ENCODE measurements at regions of chr1 and their contacts with region 1.

Region 1: DNA sequence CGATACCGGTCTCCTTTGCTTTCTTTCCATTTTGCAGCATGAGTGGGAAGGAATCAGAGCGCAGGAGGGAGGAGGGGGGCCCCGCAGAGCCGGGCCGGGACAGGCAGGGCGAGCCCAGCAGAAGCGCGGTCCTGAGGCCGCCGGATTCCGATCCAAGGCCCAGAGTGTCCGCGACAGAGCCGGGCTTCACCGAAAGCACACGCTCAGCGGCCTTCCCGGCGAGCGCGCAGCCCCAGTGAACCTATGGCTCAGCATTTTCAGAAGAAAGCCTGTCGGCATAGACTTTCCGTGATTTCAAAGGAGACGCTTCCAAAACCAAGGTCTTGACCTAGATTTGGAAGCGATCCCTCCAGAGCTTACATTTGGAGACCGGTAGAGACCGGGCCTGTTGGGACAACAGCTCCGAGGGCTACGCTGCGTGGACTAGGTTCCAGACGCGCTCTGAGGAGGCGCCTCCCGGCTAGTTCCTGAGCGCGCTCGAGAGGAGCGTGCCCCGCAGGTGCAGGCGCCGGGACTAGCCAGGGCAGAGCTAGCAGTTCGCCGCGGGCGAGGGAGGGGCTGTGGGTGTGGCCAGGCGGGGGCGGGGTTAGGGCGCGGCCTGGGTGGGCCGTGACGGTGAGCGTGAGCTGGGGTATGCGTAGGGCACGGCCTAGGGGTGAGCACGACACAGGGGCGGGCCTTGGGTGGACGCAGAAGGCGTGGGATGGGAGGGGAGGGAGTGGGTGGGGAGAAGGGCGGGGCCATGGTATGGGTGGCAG is 27.8 kb upstream of the PRSS38 start:
- DNase-seq: peak; percentile 76 to 94 (median 90)
- ATAC-seq: peak; percentile 96
- H3K4me3 ChIP-seq: peak overlapping the region; percentile 79
- H3K4me3 Mint-ChIP-seq: peak overlapping the region; percentile 81 to 89 (median 86)
- H3K27ac ChIP-seq: peak overlapping the region; percentile 23
- H3K27ac Mint-ChIP-seq: peak overlapping the region in 8 of 9 donors; percentile 23 to 84 (median 75)
- H3K4me1 ChIP-seq: peaks cover 5 to 6% of the 10 kb centered on the region in 2 donors
- H3K4me1 Mint-ChIP-seq: peaks cover 7 to 18% (median 11%) of the 10 kb centered on the region in 7 donors
- H3K27me3 ChIP-seq: no peaks in the 10 kb centered on the region
- H3K27me3 Mint-ChIP-seq: peaks cover 0 to 4% (median 0%) of the 10 kb centered on the region in 5 donors

Region 2: GRCh38 chr1:226736908-226737818 is 1050.5 kb before region 1 on chr1:
- CTCF ChIA-PET with region 1: no interaction called
- POLR2A ChIA-PET with region 1: no interaction called
- intact Hi-C with region 1: loop called in 1 of 2 experiments (anchors 10 kb)
- DNase-seq: peak in 7 of 9 donors; percentile 45 to 66 (median 59)
- ATAC-seq: peak; percentile 51
- H3K4me3 ChIP-seq: peak overlapping the region; percentile 99
- H3K4me3 Mint-ChIP-seq: peak overlapping the region; percentile 89 to 99 (median 93)
- H3K27ac ChIP-seq: peak overlapping the region; percentile 92
- H3K27ac Mint-ChIP-seq: peak overlapping the region; percentile 81 to 99 (median 97)
- H3K4me1 ChIP-seq: peaks cover 22 to 38% of the 10 kb centered on the region in 2 donors
- H3K4me1 Mint-ChIP-seq: peaks cover 14 to 54% (median 35%) of the 10 kb centered on the region in 7 donors
- H3K27me3 ChIP-seq: no peaks in the 10 kb centered on the region
- H3K27me3 Mint-ChIP-seq: no peaks in the 10 kb centered on the region

Region 3: GRCh38 chr1:227718932-227719331 is 68.8 kb before region 1 on chr1:
- CTCF ChIA-PET with region 1: no interaction called
- POLR2A ChIA-PET with region 1: no interaction called
- intact Hi-C with region 1: no loop called
- DNase-seq: no peak
- ATAC-seq: no peak
- H3K4me3 ChIP-seq: no peak overlapping the region
- H3K4me3 Mint-ChIP-seq: no peak overlapping the region
- H3K27ac ChIP-seq: no peak overlapping the region
- H3K27ac Mint-ChIP-seq: no peak overlapping the region
- H3K4me1 ChIP-seq: no peaks in the 10 kb centered on the region
- H3K4me1 Mint-ChIP-seq: no peaks in the 10 kb centered on the region
- H3K27me3 ChIP-seq: no peaks in the 10 kb centered on the region
- H3K27me3 Mint-ChIP-seq: peaks cover 0 to 19% (median 0%) of the 10 kb centered on the region in 5 donors

Region 4: GRCh38 chr1:227734856-227735538 is 52.7 kb before region 1 on chr1 and contains the starts of genes JMJD4 and SNAP47:
- CTCF ChIA-PET with region 1: no interaction called
- POLR2A ChIA-PET with region 1: interaction called, 3 read pairs
- intact Hi-C with region 1: loop called (anchors 1 kb)
- DNase-seq: peak; percentile 85 to 98 (median 93)
- ATAC-seq: peak; percentile 94
- H3K4me3 ChIP-seq: peak within 1 kb of the TSS; percentile 72
- H3K4me3 Mint-ChIP-seq: peak within 1 kb of the TSS; percentile 87 to 97 (median 90)
- H3K27ac ChIP-seq: peak within 1 kb of the TSS; percentile 87
- H3K27ac Mint-ChIP-seq: peak within 1 kb of the TSS; percentile 62 to 96 (median 89)
- H3K4me1 ChIP-seq: peaks cover 3 to 16% of the 10 kb centered on the region in 2 donors
- H3K4me1 Mint-ChIP-seq: peaks cover 28 to 59% (median 40%) of the 10 kb centered on the region in 7 donors
- H3K27me3 ChIP-seq: no peaks in the 10 kb centered on the region
- H3K27me3 Mint-ChIP-seq: no peaks in the 10 kb centered on the region
- total RNA-seq, gene JMJD4: 12.1 to 36.8 (median 26.3) TPM
- total RNA-seq, gene SNAP47: 18.5 to 31.8 (median 27.8) TPM

Region 5: DNA sequence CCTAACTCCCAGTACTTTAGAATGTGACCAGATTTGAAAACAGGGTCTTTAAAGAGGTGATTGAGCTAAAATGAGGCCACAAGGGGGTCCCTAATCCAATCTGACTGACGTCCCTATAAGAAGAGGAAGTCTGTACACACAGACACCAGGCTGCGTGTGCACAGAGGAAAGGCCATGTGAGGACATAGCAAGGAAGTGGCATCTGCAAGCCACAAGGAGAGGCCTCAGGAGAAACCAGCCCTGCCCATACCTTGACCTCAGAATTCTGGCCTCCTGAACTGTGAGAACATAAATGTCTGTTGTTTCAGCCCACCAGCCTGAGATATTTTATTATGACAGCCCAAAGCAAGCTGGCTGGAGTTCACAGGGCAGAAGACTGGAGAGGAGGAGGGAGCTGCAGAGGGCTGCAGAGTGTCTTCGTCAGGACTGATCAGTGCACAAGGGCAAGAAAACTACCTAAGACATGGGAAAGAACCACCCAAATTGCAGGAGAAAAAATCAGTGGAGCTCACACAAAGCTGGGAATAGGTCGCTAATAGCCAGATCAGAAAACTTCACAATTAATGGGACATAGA is 174.0 kb after region 1 on chr1:
- CTCF ChIA-PET with region 1: no interaction called
- POLR2A ChIA-PET with region 1: no interaction called
- intact Hi-C with region 1: no loop called
- DNase-seq: no peak
- ATAC-seq: no peak
- H3K4me3 ChIP-seq: no peak overlapping the region
- H3K4me3 Mint-ChIP-seq: no peak overlapping the region
- H3K27ac ChIP-seq: no peak overlapping the region
- H3K27ac Mint-ChIP-seq: no peak overlapping the region
- H3K4me1 ChIP-seq: no peaks in the 10 kb centered on the region
- H3K4me1 Mint-ChIP-seq: peaks cover 0 to 6% (median 0%) of the 10 kb centered on the region in 7 donors
- H3K27me3 ChIP-seq: no peaks in the 10 kb centered on the region
- H3K27me3 Mint-ChIP-seq: peaks cover 14 to 28% (median 22%) of the 10 kb centered on the region in 5 donors

Region 6: GRCh38 chr1:228059634-228060457 is 272.2 kb after region 1 on chr1:
- CTCF ChIA-PET with region 1: no interaction called
- POLR2A ChIA-PET with region 1: no interaction called
- intact Hi-C with region 1: loop called (anchors 1 kb)
- DNase-seq: peak in 6 of 9 donors; percentile 42 to 76 (median 52)
- ATAC-seq: peak; percentile 73
- H3K4me3 ChIP-seq: peak overlapping the region; percentile 48
- H3K4me3 Mint-ChIP-seq: peak overlapping the region; percentile 58 to 82 (median 66)
- H3K27ac ChIP-seq: no peak overlapping the region
- H3K27ac Mint-ChIP-seq: peak overlapping the region in 4 of 9 donors; percentile 51 to 70 (median 60)
- H3K4me1 ChIP-seq: peaks cover 5 to 19% of the 10 kb centered on the region in 2 donors
- H3K4me1 Mint-ChIP-seq: peaks cover 6 to 15% (median 7%) of the 10 kb centered on the region in 7 donors
- H3K27me3 ChIP-seq: peaks cover 9 to 30% of the 10 kb centered on the region in 2 donors
- H3K27me3 Mint-ChIP-seq: peaks cover 21 to 50% (median 38%) of the 10 kb centered on the region in 5 donors

Region 7: DNA sequence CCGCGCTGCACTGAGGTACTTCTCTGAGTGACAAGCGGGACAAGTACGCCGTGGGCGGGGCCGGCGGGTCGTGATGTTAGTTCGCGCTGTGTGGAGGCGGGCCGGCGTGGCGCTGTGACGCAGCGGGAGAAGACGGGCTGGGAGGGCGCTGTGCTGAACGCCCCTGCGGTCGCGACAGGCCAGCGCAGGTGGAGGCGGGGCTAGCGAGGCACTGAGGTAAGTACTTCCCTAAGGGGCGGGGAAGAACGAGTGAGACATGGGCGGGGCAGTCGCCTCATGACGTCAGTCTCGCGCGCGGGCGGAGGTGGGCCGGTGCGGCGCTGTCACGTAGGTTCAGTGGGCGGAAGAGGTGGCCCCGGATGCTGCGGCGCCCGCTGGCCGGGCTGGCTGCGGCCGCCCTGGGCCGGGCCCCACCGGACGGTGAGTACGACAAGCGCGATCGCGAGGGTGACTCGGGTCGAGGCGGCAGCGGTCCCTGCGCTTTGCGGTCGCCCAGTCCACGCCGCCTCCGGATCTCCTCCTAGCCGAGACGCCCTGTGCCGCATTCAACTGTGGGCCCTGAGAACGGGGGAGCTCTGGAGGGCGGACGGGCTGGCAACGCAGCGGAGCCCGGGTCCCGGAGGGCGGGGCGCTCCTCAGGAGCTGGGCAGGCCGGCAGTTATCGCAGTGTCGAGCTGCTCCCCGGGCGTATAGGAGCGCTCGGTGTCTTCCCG is 352.4 kb after region 1 on chr1 and contains the start of gene GUK1:
- CTCF ChIA-PET with region 1: no interaction called
- POLR2A ChIA-PET with region 1: no interaction called
- intact Hi-C with region 1: loop called in 1 of 2 experiments (anchors 1 kb)
- DNase-seq: peak; percentile 98 to 100 (median 100)
- ATAC-seq: peak; percentile 93
- H3K4me3 ChIP-seq: peak within 1 kb of the TSS; percentile 88
- H3K4me3 Mint-ChIP-seq: peak within 1 kb of the TSS; percentile 87 to 99 (median 95)
- H3K27ac ChIP-seq: peak within 1 kb of the TSS; percentile 99
- H3K27ac Mint-ChIP-seq: peak within 1 kb of the TSS; percentile 83 to 100 (median 99)
- H3K4me1 ChIP-seq: peaks cover 42 to 49% of the 10 kb centered on the region in 2 donors
- H3K4me1 Mint-ChIP-seq: peaks cover 23 to 48% (median 34%) of the 10 kb centered on the region in 7 donors
- H3K27me3 ChIP-seq: no peaks in the 10 kb centered on the region
- H3K27me3 Mint-ChIP-seq: peaks cover 0 to 24% (median 0%) of the 10 kb centered on the region in 5 donors
- total RNA-seq, gene GUK1: 145 to 309 (median 279) TPM

Region 8: GRCh38 chr1:228457396-228458176 is 669.9 kb after region 1 on chr1:
- CTCF ChIA-PET with region 1: no interaction called
- POLR2A ChIA-PET with region 1: no interaction called
- intact Hi-C with region 1: loop called (anchors 2 to 5 kb)
- DNase-seq: peak; percentile 61 to 95 (median 88)
- ATAC-seq: peak; percentile 88
- H3K4me3 ChIP-seq: peak overlapping the region; percentile 78
- H3K4me3 Mint-ChIP-seq: peak overlapping the region; percentile 80 to 97 (median 94)
- H3K27ac ChIP-seq: peak overlapping the region; percentile 87
- H3K27ac Mint-ChIP-seq: peak overlapping the region; percentile 93 to 99 (median 98)
- H3K4me1 ChIP-seq: peaks cover 14 to 17% of the 10 kb centered on the region in 2 donors
- H3K4me1 Mint-ChIP-seq: peaks cover 26 to 64% (median 42%) of the 10 kb centered on the region in 7 donors
- H3K27me3 ChIP-seq: no peaks in the 10 kb centered on the region
- H3K27me3 Mint-ChIP-seq: peaks cover 0 to 7% (median 2%) of the 10 kb centered on the region in 5 donors